B cell (primary cell): ENCODE measurements at regions of chr4 and their contacts with region 1.

Region 1: DNA sequence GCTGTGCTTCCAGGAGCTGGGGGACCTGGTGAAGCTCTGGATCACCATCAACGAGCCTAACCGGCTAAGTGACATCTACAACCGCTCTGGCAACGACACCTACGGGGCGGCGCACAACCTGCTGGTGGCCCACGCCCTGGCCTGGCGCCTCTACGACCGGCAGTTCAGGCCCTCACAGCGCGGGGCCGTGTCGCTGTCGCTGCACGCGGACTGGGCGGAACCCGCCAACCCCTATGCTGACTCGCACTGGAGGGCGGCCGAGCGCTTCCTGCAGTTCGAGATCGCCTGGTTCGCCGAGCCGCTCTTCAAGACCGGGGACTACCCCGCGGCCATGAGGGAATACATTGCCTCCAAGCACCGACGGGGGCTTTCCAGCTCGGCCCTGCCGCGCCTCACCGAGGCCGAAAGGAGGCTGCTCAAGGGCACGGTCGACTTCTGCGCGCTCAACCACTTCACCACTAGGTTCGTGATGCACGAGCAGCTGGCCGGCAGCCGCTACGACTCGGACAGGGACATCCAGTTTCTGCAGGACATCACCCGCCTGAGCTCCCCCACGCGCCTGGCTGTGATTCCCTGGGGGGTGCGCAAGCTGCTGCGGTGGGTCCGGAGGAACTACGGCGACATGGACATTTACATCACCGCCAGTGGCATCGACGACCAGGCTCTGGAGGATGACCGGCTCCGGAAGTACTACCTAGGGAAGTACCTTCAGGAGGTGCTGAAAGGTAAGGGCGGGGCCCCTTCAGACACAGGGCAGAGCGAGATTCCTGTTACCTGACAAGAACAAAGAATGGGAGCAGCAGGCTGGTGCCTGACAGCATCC is 11.8 kb downstream of the RPL9 start:
- DNase-seq: peak; percentile 94
- ATAC-seq: peak; percentile 94
- H3K4me3 ChIP-seq: peak overlapping the region; percentile 12 to 64 (median 52)
- H3K4me3 Mint-ChIP-seq: peak overlapping the region; percentile 89
- H3K27ac ChIP-seq: peak overlapping the region; percentile 69
- H3K27ac Mint-ChIP-seq: peak overlapping the region; percentile 91
- H3K4me1 ChIP-seq: peaks cover 13 to 18% of the 10 kb centered on the region in 2 donors
- H3K4me1 Mint-ChIP-seq: peaks cover 23% of the 10 kb centered on the region
- H3K27me3 ChIP-seq: no peaks in the 10 kb centered on the region
- H3K27me3 Mint-ChIP-seq: no peaks in the 10 kb centered on the region
- CTCF ChIP-seq: peak; percentile 51

Region 2: GRCh38 chr4:39181905-39182638 is 264.9 kb before region 1 on chr4 and contains the start of gene WDR19:
- CTCF ChIA-PET with region 1: no interaction called
- POLR2A ChIA-PET with region 1: no interaction called
- intact Hi-C with region 1: loop called (anchors 2 kb)
- DNase-seq: peak; percentile 99
- ATAC-seq: peak; percentile 96
- H3K4me3 ChIP-seq: peak within 1 kb of the TSS; percentile 76 to 99 (median 94)
- H3K4me3 Mint-ChIP-seq: peak within 1 kb of the TSS; percentile 47
- H3K27ac ChIP-seq: peak within 1 kb of the TSS; percentile 12 to 79
- H3K27ac Mint-ChIP-seq: no peak within 1 kb of the TSS
- H3K4me1 ChIP-seq: peaks cover 12 to 16% of the 10 kb centered on the region in 2 donors
- H3K4me1 Mint-ChIP-seq: peaks cover 8% of the 10 kb centered on the region
- H3K27me3 ChIP-seq: no peaks in the 10 kb centered on the region
- H3K27me3 Mint-ChIP-seq: no peaks in the 10 kb centered on the region
- CTCF ChIP-seq: peak; percentile 73
- total RNA-seq, gene WDR19: 79.8 and 83.2 TPM in 2 replicates

Region 3: GRCh38 chr4:39353478-39354253 is 93.3 kb before region 1 on chr4:
- CTCF ChIA-PET with region 1: no interaction called
- POLR2A ChIA-PET with region 1: no interaction called
- intact Hi-C with region 1: loop called (anchors 2 kb)
- DNase-seq: peak; percentile 67
- ATAC-seq: peak; percentile 59
- H3K4me3 ChIP-seq: peak overlapping the region; percentile 2 to 72 (median 43)
- H3K4me3 Mint-ChIP-seq: peak overlapping the region; percentile 90
- H3K27ac ChIP-seq: peak overlapping the region; percentile 46 to 74
- H3K27ac Mint-ChIP-seq: peak overlapping the region; percentile 89
- H3K4me1 ChIP-seq: peaks cover 50 to 54% of the 10 kb centered on the region in 2 donors
- H3K4me1 Mint-ChIP-seq: peaks cover 54% of the 10 kb centered on the region
- H3K27me3 ChIP-seq: no peaks in the 10 kb centered on the region
- H3K27me3 Mint-ChIP-seq: no peaks in the 10 kb centered on the region
- CTCF ChIP-seq: no peak

Region 4: GRCh38 chr4:39458505-39459300 is 11.7 kb after region 1 on chr4 and contains the starts of genes LIAS and RPL9:
- CTCF ChIA-PET with region 1: interaction called, 6 read pairs
- POLR2A ChIA-PET with region 1: interaction called, 23 read pairs
- intact Hi-C with region 1: loop called (anchors 1 kb)
- DNase-seq: peak; percentile 98
- ATAC-seq: peak; percentile 86
- H3K4me3 ChIP-seq: peak within 1 kb of the TSS; percentile 77 to 100 (median 98)
- H3K4me3 Mint-ChIP-seq: peak within 1 kb of the TSS; percentile 97
- H3K27ac ChIP-seq: peak within 1 kb of the TSS; percentile 98 to 99
- H3K27ac Mint-ChIP-seq: peak within 1 kb of the TSS; percentile 99
- H3K4me1 ChIP-seq: peaks cover 19 to 27% of the 10 kb centered on the region in 2 donors
- H3K4me1 Mint-ChIP-seq: peaks cover 38% of the 10 kb centered on the region
- H3K27me3 ChIP-seq: no peaks in the 10 kb centered on the region
- H3K27me3 Mint-ChIP-seq: no peaks in the 10 kb centered on the region
- CTCF ChIP-seq: no peak
- total RNA-seq, gene LIAS: 20.9 and 24.7 TPM in 2 replicates
- total RNA-seq, gene RPL9: 2,031 and 2,048 TPM in 2 replicates